A673 (cell line): ENCODE measurements at regions of chr1 and their contacts with region 1.

Region 1: GRCh38 chr1:15315815-15316214 is 68.8 kb downstream of the FHAD1 start:
- DNase-seq: no peak
- H3K4me3 ChIP-seq: no peak overlapping the region
- H3K27ac ChIP-seq: no peak overlapping the region
- H3K4me1 ChIP-seq: no peaks in the 10 kb centered on the region
- H3K27me3 ChIP-seq: no peaks in the 10 kb centered on the region
- CTCF ChIP-seq: no peak

Region 2: DNA sequence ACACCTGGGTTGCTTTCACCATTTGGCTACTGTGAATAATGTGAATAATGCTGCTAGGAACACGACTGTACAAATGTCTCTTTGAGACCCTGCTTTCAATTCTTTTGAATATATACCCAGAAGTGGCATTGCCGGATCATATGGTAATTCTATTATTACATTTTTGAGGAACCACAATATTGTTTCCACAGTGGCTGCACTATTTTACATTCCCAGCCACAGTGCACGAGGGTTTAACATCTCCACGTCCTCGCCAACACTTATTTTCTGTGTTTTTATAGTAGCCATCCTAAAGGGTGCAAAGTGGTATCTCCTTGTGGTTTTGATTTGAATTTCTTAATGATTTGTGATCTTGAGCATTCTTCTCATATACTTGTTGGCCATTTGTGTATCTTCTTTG is 53.1 kb before region 1 on chr1:
- CTCF ChIA-PET with region 1: no interaction called
- POLR2A ChIA-PET with region 1: interaction called, 17 read pairs
- intact Hi-C with region 1: no loop called
- DNase-seq: no peak
- H3K4me3 ChIP-seq: no peak overlapping the region
- H3K27ac ChIP-seq: no peak overlapping the region
- H3K4me1 ChIP-seq: no peaks in the 10 kb centered on the region
- H3K27me3 ChIP-seq: no peaks in the 10 kb centered on the region
- CTCF ChIP-seq: no peak